Posterior cingulate gyrus (tissue), 11 donors: ENCODE measurements at regions of chrX and their contacts with region 1.

Region 1: DNA sequence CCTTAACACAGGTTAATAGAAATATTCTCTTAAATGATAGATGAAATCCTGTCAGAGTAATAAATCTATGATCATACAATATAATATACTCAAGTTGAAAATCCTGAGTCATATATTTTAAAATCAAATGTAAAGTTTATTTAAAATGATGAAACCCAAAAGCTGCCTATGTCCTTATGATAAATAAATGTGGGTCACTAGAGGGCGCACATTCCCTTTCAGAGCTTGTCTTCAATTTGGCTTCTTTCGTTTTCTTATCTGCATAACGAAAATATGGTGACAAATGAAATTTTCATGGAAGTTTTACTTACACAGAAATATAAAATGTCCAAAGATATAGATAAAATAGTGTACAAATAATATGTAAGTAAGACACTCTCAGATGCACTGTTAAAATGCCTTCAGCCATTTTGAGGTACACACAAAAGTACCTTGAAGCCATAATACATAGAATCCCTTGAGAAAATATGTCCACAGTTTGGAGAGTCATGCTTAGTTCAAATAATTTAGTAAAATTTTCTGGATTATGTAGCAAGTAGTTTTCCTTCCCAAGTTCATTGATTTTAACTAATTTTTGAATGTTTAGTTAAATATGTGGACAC is 680.4 kb downstream of the DMD start:
- DNase-seq: peak in 2 of 10 donors; percentile 8 to 17

Region 2: GRCh38 chrX:32673193-32673592 is 142.3 kb after region 1 on chrX:
- intact Hi-C with region 1: loop called (anchors 5 kb)
- DNase-seq: no peak

Region 3: GRCh38 chrX:33336783-33337182 is 805.9 kb after region 1 on chrX:
- intact Hi-C with region 1: loop called (anchors 5 kb)
- DNase-seq: peak in 2 of 10 donors; percentile 12 to 29